Dorsolateral prefrontal cortex (tissue), 120 donors: ENCODE measurements at regions of chr4 and their contacts with region 1.

Region 1: DNA sequence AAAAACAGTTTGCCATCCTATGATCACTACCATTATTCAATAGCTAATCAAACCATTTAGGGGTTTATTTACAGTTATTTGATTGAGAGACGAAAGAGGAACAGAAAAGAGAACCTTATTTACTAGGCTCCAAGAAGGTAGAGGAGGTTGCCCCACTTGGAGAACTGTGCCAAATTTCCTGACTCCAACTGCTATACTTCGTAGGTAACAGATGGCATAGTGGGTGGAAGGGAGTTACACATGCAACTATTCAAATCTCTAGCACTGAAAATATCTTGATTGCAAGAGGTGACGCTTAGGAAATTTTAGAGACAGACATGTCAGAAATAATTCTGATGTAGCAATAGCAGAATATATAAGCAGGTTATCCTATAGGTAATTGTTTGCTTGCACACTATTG is 38.0 kb upstream of the TMPRSS11F start:
- DNase-seq: peak in 2 of 10 donors; percentile 34 to 55
- H3K4me3 ChIP-seq: no peak overlapping the region
- H3K27ac ChIP-seq: peak overlapping the region in 3 of 59 donors; percentile 5 to 43 (median 12)
- H3K27me3 ChIP-seq: no peaks in the 10 kb centered on the region
- CTCF ChIP-seq: no peak

Region 2: GRCh38 chr4:67288964-67289363 is 878.7 kb before region 1 on chr4:
- intact Hi-C with region 1: loop called in 1 of 2 experiments (anchors 10 kb)
- DNase-seq: no peak
- H3K4me3 ChIP-seq: no peak overlapping the region
- H3K27ac ChIP-seq: no peak overlapping the region
- H3K27me3 ChIP-seq: no peaks in the 10 kb centered on the region
- CTCF ChIP-seq: peak in 9 of 56 donors; percentile 10 to 26 (median 15)

Region 3: GRCh38 chr4:67437974-67438713 is 729.6 kb before region 1 on chr4:
- intact Hi-C with region 1: no loop called
- DNase-seq: no peak
- H3K4me3 ChIP-seq: peak overlapping the region in 1 of 59 donors; percentile 10
- H3K27ac ChIP-seq: peak overlapping the region in 33 of 59 donors; percentile 2 to 84 (median 43)
- H3K27me3 ChIP-seq: no peaks in the 10 kb centered on the region
- CTCF ChIP-seq: no peak

Region 4: GRCh38 chr4:67983333-67983732 is 184.4 kb before region 1 on chr4:
- intact Hi-C with region 1: no loop called
- DNase-seq: no peak
- H3K4me3 ChIP-seq: no peak overlapping the region
- H3K27ac ChIP-seq: no peak overlapping the region
- H3K27me3 ChIP-seq: no peaks in the 10 kb centered on the region
- CTCF ChIP-seq: no peak